ENCODE measurements at regions of chr3 and their contacts with region 1.

Region 1: GRCh38 chr3:50321336-50322114 is 1.0 kb downstream of the HYAL2 start:
- DNase-seq: peak; percentile 88
- ATAC-seq: peak; percentile 81
- H3K4me3 Mint-ChIP-seq: peak overlapping the region; percentile 88
- H3K27ac Mint-ChIP-seq: peak overlapping the region; percentile 98
- H3K4me1 Mint-ChIP-seq: peaks cover 40% of the 10 kb centered on the region
- H3K27me3 Mint-ChIP-seq: no peaks in the 10 kb centered on the region
- CTCF ChIP-seq: no peak

Region 2: GRCh38 chr3:50227390-50228183 is 93.9 kb before region 1 on chr3:
- CTCF ChIA-PET with region 1: no interaction called
- POLR2A ChIA-PET with region 1: no interaction called
- intact Hi-C with region 1: loop called (anchors 1 kb)
- DNase-seq: peak; percentile 93
- ATAC-seq: peak; percentile 81
- H3K4me3 Mint-ChIP-seq: peak overlapping the region; percentile 94
- H3K27ac Mint-ChIP-seq: peak overlapping the region; percentile 88
- H3K4me1 Mint-ChIP-seq: peaks cover 40% of the 10 kb centered on the region
- H3K27me3 Mint-ChIP-seq: peaks cover 5% of the 10 kb centered on the region
- CTCF ChIP-seq: peak; percentile 92

Region 3: DNA sequence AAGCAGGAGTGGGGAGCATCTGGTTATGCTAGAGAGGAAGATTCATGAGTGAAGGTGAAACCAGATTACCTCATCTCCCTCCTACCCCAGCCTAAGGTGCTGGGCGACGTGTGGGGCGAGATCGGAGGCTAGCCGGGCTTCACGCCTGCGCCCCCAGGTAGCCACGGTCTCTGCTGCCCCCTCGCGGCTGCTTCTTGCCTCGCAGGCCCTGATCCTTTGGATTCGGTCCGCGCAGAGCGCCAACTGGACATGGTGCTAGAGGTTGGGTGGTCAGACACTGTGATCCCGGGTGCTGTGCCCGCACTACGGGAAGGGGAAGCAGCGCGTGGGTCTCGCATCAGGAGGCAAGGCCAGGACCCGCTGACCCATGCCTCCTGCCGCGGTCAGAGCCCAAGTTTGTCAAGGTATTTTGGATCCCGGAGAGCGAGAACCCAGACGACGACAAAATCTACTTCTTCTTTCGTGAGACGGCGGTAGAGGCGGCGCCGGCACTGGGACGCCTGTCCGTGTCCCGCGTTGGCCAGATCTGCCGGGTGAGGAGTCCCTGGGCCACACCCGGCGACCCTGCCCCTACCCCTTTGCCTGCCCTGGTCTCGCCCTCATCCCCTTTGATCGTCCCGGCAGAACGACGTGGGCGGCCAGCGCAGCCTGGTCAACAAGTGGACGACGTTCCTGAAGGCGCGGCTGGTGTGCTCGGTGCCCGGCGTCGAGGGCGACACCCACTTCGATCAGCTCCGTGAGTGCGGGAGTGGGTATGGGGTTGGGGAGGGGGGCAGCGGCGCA is 48.4 kb before region 1 on chr3:
- CTCF ChIA-PET with region 1: interaction called, 5 read pairs
- POLR2A ChIA-PET with region 1: no interaction called
- intact Hi-C with region 1: loop called (anchors 1 kb)
- DNase-seq: peak; percentile 91
- ATAC-seq: peak; percentile 98
- H3K4me3 Mint-ChIP-seq: peak overlapping the region; percentile 69
- H3K27ac Mint-ChIP-seq: no peak overlapping the region
- H3K4me1 Mint-ChIP-seq: peaks cover 25% of the 10 kb centered on the region
- H3K27me3 Mint-ChIP-seq: peaks cover 35% of the 10 kb centered on the region
- CTCF ChIP-seq: no peak

Region 4: DNA sequence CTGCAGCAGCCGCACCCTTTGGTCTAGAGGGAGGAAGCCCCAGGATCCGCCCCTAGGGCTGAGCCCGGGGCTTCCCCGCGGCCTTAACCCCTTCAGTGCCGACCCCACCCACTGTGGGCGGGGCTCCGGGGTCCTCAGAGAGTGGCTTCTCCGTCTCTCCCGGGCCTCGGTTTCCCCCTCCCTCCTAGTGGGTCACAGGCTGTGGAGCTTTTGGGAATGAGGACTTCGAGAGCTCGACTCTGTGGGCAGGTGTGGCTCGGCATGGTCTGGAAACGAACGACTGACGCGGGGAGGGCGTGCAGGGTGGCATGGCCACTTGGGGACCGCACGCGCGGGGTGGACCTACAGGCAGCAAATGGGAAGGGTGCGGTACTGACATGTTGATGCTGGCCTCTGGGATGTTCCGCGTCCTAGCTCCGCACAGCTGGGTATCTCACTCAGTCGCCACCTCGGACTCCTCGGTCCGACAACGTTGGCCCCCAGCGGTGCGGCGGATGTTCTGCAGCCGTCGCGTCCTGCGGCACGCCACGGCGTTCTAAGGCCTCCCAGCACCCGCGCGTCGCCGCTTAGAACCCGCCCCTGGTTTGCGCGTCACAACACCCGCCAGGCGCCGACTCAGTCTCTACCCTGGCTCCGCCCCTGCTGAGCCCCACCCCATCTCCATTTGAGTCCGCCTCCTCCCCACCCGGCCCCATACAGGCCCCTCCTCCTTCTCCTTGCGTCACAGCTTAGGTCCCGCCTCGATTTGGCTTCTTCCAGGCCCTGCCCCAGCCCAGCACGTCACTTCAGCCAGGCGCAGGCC is 22.5 kb before region 1 on chr3 and contains the starts of genes HYAL3 and NAA80:
- CTCF ChIA-PET with region 1: interaction called, 9 read pairs
- POLR2A ChIA-PET with region 1: interaction called, 20 read pairs
- intact Hi-C with region 1: loop called (anchors 1 kb)
- DNase-seq: peak; percentile 98
- ATAC-seq: peak; percentile 89
- H3K4me3 Mint-ChIP-seq: peak within 1 kb of the TSS; percentile 98
- H3K27ac Mint-ChIP-seq: peak within 1 kb of the TSS; percentile 98
- H3K4me1 Mint-ChIP-seq: peaks cover 30% of the 10 kb centered on the region
- H3K27me3 Mint-ChIP-seq: no peaks in the 10 kb centered on the region
- CTCF ChIP-seq: no peak
- total RNA-seq, gene HYAL3: 2.0 and 2.5 TPM in 2 replicates
- total RNA-seq, gene NAA80: 23.9 and 24.8 TPM in 2 replicates

Region 5: GRCh38 chr3:50350527-50351322 is 29.2 kb after region 1 on chr3 and contains the starts of genes CYB561D2 and NPRL2:
- CTCF ChIA-PET with region 1: interaction called, 5 read pairs
- POLR2A ChIA-PET with region 1: interaction called, 10 read pairs
- intact Hi-C with region 1: loop called (anchors 1 kb)
- DNase-seq: peak; percentile 99
- ATAC-seq: peak; percentile 89
- H3K4me3 Mint-ChIP-seq: peak within 1 kb of the TSS; percentile 97
- H3K27ac Mint-ChIP-seq: peak within 1 kb of the TSS; percentile 99
- H3K4me1 Mint-ChIP-seq: peaks cover 60% of the 10 kb centered on the region
- H3K27me3 Mint-ChIP-seq: no peaks in the 10 kb centered on the region
- CTCF ChIP-seq: no peak
- total RNA-seq, gene CYB561D2: 22.9 and 26.0 TPM in 2 replicates
- total RNA-seq, gene NPRL2: 23.6 and 26.4 TPM in 2 replicates

Region 6: GRCh38 chr3:50370594-50370993 is 49.1 kb after region 1 on chr3:
- CTCF ChIA-PET with region 1: no interaction called
- POLR2A ChIA-PET with region 1: no interaction called
- intact Hi-C with region 1: no loop called
- DNase-seq: no peak
- ATAC-seq: no peak
- H3K4me3 Mint-ChIP-seq: no peak overlapping the region
- H3K27ac Mint-ChIP-seq: no peak overlapping the region
- H3K4me1 Mint-ChIP-seq: peaks cover 8% of the 10 kb centered on the region
- H3K27me3 Mint-ChIP-seq: peaks cover 2% of the 10 kb centered on the region
- CTCF ChIP-seq: no peak

Region 7: GRCh38 chr3:52076896-52077780 is 1755.6 kb after region 1 on chr3:
- CTCF ChIA-PET with region 1: no interaction called
- POLR2A ChIA-PET with region 1: no interaction called
- intact Hi-C with region 1: no loop called
- DNase-seq: no peak
- ATAC-seq: no peak
- H3K4me3 Mint-ChIP-seq: no peak overlapping the region
- H3K27ac Mint-ChIP-seq: no peak overlapping the region
- H3K4me1 Mint-ChIP-seq: no peaks in the 10 kb centered on the region
- H3K27me3 Mint-ChIP-seq: no peaks in the 10 kb centered on the region
- CTCF ChIP-seq: no peak